Transverse colon (tissue), 4 donors: ENCODE measurements at regions of chr13 and their contacts with region 1.

Region 1: GRCh38 chr13:40682449-40683240 is 16.2 kb upstream of the FOXO1 start:
- DNase-seq: no peak
- H3K4me3 ChIP-seq: no peak overlapping the region
- H3K27ac ChIP-seq: no peak overlapping the region
- H3K4me1 ChIP-seq: peaks cover 0 to 6% (median 0%) of the 10 kb centered on the region in 4 donors
- H3K27me3 ChIP-seq: no peaks in the 10 kb centered on the region
- CTCF ChIP-seq: peak; percentile 60 to 75 (median 71)
- EP300 ChIP-seq: no peak
- POLR2A ChIP-seq: no peak

Region 2: DNA sequence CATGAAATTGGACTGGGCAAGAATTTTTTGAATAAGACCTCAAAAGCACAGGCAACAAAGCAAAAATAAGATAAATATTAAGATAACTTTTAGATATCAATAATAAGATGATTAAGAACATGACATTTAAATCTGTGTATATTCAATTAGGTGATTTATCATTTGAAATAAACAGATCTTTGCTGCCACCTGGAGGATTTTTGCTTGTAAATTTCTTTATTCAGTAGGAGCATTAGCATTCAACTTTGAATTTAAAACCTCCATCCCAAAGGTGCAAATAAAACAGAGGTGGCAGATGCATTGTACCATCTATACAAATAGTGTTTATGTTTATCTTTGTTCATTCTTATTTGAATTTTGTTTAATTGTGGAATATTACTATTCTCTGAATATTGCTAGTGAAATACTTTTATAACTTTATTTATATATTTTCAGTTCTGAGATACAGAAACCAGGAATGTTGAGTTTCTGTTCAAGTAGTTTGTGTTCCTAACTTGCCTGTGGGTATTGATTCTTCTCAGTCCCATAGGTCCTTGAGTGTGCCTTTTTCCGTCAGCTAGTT is 1006.2 kb before region 1 on chr13:
- in situ Hi-C with region 1: loop called in 3 of 4 experiments (anchors 25 kb)
- intact Hi-C with region 1: loop called (anchors 10 kb)
- DNase-seq: no peak
- H3K4me3 ChIP-seq: no peak overlapping the region
- H3K27ac ChIP-seq: no peak overlapping the region
- H3K4me1 ChIP-seq: peaks cover 0 to 5% (median 0%) of the 10 kb centered on the region in 4 donors
- H3K27me3 ChIP-seq: no peaks in the 10 kb centered on the region
- CTCF ChIP-seq: peak; percentile 36 to 45 (median 40)
- EP300 ChIP-seq: no peak
- POLR2A ChIP-seq: no peak

Region 3: GRCh38 chr13:39684531-39685137 is 998.0 kb before region 1 on chr13:
- in situ Hi-C with region 1: loop called in 3 of 4 experiments (anchors 25 kb)
- intact Hi-C with region 1: loop called (anchors 10 kb)
- DNase-seq: no peak
- H3K4me3 ChIP-seq: no peak overlapping the region
- H3K27ac ChIP-seq: no peak overlapping the region
- H3K4me1 ChIP-seq: peaks cover 0 to 3% (median 0%) of the 10 kb centered on the region in 4 donors
- H3K27me3 ChIP-seq: no peaks in the 10 kb centered on the region
- CTCF ChIP-seq: peak; percentile 36 to 49 (median 42)
- EP300 ChIP-seq: no peak
- POLR2A ChIP-seq: no peak

Region 4: GRCh38 chr13:39765801-39766463 is 916.7 kb before region 1 on chr13:
- in situ Hi-C with region 1: loop called in 1 of 4 experiments (anchors 25 kb)
- intact Hi-C with region 1: no loop called
- DNase-seq: peak; percentile 76
- H3K4me3 ChIP-seq: no peak overlapping the region
- H3K27ac ChIP-seq: peak overlapping the region in 1 of 4 donors; percentile 19
- H3K4me1 ChIP-seq: peaks cover 0 to 41% (median 10%) of the 10 kb centered on the region in 4 donors
- H3K27me3 ChIP-seq: no peaks in the 10 kb centered on the region
- CTCF ChIP-seq: peak in 4 of 5 experiments; percentile 27 to 39 (median 34)
- EP300 ChIP-seq: no peak
- POLR2A ChIP-seq: no peak

Region 5: GRCh38 chr13:39803179-39803578 is 879.5 kb before region 1 on chr13:
- in situ Hi-C with region 1: no loop called
- intact Hi-C with region 1: no loop called
- DNase-seq: no peak
- H3K4me3 ChIP-seq: no peak overlapping the region
- H3K27ac ChIP-seq: no peak overlapping the region
- H3K4me1 ChIP-seq: no peaks in the 10 kb centered on the region
- H3K27me3 ChIP-seq: no peaks in the 10 kb centered on the region
- CTCF ChIP-seq: no peak
- EP300 ChIP-seq: no peak
- POLR2A ChIP-seq: no peak

Region 6: DNA sequence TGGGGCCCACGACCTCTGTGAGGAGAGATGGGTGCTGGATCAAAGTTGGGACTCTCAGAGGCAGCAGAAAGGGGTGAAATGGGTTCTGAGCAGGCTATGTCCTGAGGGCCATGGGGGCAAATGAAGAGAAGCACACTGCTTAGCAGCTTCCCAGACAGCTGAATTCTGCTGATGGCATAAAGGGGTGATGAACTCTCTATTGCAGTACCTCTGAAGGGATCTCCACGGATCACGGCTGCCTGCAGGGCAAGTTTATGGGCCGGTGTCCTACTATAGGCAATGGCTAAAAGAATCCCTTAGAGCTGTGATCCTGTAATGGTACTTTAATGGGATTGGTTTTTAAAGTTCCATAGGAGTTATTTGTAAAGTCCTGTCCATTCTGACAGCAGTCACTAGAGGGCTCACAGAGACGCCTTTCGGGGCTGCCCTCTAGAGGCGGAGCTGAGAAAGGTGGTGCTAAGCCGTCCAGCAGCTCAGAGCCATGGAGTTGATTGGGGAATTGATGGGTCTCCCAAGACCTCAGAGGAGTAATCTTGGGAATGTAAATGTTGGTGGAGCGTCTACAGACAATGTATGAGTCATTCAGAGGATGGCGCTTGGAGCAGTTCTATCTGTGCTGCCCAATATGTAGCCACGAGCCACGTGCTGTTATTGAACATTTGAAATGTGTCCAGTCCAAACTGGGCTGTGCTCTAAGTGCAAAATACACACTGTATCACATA is 739.9 kb before region 1 on chr13:
- in situ Hi-C with region 1: loop called (anchors 5 to 25 kb)
- intact Hi-C with region 1: no loop called
- DNase-seq: peak; percentile 69
- H3K4me3 ChIP-seq: no peak overlapping the region
- H3K27ac ChIP-seq: no peak overlapping the region
- H3K4me1 ChIP-seq: peaks cover 0 to 4% (median 0%) of the 10 kb centered on the region in 4 donors
- H3K27me3 ChIP-seq: no peaks in the 10 kb centered on the region
- CTCF ChIP-seq: peak; percentile 79 to 86 (median 82)
- EP300 ChIP-seq: no peak
- POLR2A ChIP-seq: no peak

Region 7: GRCh38 chr13:40069173-40070044 is 613.2 kb before region 1 on chr13:
- in situ Hi-C with region 1: loop called (anchors 5 to 10 kb)
- intact Hi-C with region 1: loop called (anchors 5 kb)
- DNase-seq: peak; percentile 80
- H3K4me3 ChIP-seq: no peak overlapping the region
- H3K27ac ChIP-seq: no peak overlapping the region
- H3K4me1 ChIP-seq: peaks cover 0 to 8% (median 0%) of the 10 kb centered on the region in 4 donors
- H3K27me3 ChIP-seq: no peaks in the 10 kb centered on the region
- CTCF ChIP-seq: peak; percentile 81 to 92 (median 88)
- EP300 ChIP-seq: no peak
- POLR2A ChIP-seq: no peak

Region 8: GRCh38 chr13:40897058-40897457 is 214.4 kb after region 1 on chr13:
- in situ Hi-C with region 1: no loop called
- intact Hi-C with region 1: no loop called
- DNase-seq: no peak
- H3K4me3 ChIP-seq: no peak overlapping the region
- H3K27ac ChIP-seq: peak overlapping the region; percentile 66 to 79 (median 70)
- H3K4me1 ChIP-seq: peaks cover 0 to 35% (median 22%) of the 10 kb centered on the region in 4 donors
- H3K27me3 ChIP-seq: no peaks in the 10 kb centered on the region
- CTCF ChIP-seq: no peak
- EP300 ChIP-seq: no peak
- POLR2A ChIP-seq: no peak